Activated B cell treated with CpG ODN at 0.5 μM for 24 hours (primary cell): ENCODE measurements at regions of chr10 and their contacts with region 1.

Region 1: GRCh38 chr10:89207181-89207800 is at the start of gene CH25H:
- DNase-seq: no peak
- ATAC-seq: peak; percentile 65
- H3K4me3 Mint-ChIP-seq: peak within 1 kb of the TSS; percentile 83
- H3K27ac Mint-ChIP-seq: no peak within 1 kb of the TSS
- H3K4me1 Mint-ChIP-seq: peaks cover 27% of the 10 kb centered on the region
- H3K27me3 Mint-ChIP-seq: peaks cover 47% of the 10 kb centered on the region
- CTCF ChIP-seq: no peak
- total RNA-seq, gene CH25H: not detected in 2 replicates

Region 2: DNA sequence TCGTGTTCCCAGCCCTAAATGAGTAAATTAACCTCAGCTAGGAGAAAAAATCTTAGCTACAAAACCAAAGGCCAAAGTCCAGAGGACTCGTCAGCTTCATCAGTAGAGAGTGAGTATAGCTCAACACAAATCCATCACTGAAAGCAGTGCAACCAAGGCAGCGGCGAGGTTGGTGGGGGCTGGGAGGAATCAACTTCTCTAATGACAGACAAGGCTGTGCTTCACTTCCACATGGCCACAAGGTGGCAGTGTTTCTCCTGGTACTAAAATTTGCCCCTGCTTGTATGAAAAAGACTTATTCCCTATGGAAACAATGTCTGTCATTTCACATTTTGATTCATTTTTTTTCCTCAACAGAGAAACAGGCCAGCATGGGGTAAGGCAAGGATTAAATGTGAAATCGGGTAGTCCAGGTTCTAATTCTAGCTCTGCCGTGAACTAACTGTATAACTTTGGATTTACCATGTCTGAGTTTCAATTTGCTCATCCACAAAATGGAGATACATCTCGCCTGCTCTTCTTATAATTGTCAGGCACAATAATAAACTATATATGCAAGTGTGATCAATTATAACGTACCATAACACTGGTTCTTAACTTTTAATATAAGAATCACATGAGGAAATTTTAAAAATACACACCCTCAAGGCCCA is 177.4 kb before region 1 on chr10:
- CTCF ChIA-PET with region 1: interaction called, 16 read pairs
- POLR2A ChIA-PET with region 1: interaction called, 4 read pairs
- intact Hi-C with region 1: no loop called
- DNase-seq: peak; percentile 22
- ATAC-seq: peak; percentile 82
- H3K4me3 Mint-ChIP-seq: no peak overlapping the region
- H3K27ac Mint-ChIP-seq: no peak overlapping the region
- H3K4me1 Mint-ChIP-seq: peaks cover 15% of the 10 kb centered on the region
- H3K27me3 Mint-ChIP-seq: no peaks in the 10 kb centered on the region
- CTCF ChIP-seq: peak; percentile 70

Region 3: DNA sequence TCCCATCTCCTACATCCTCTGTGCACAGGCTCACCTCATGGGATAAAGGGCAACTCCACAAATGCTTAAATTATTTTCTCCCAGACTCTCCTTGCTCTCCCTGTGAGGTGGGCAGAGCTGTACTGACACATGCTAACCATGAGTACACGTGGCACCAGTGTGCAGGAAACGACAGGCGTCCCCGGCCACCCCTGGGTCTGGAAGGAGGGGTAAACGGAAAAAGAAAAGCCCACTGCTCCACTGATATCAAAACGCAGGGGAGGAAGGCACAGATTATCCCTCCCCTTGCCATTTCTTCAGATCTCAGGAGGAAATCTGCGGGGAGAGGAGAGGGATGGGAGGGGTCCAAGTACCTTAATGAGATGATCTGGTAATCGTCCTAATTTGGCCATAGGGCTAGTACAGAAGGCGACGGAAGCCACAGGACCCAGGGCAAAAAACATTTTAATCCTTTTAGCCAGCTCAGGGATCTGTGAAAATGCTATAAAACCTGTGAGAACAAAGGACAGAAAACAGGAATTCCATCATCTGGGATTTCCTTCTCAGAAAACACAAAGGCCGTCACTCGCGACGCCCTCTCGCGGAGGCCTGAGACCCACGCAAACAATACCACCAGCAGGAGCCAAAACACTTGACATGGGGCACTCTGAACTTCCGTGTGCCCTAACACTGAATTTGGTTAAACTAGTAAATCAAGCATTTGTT is 17.6 kb after region 1 on chr10:
- CTCF ChIA-PET with region 1: no interaction called
- POLR2A ChIA-PET with region 1: no interaction called
- intact Hi-C with region 1: no loop called
- DNase-seq: no peak
- ATAC-seq: no peak
- H3K4me3 Mint-ChIP-seq: peak overlapping the region; percentile 46
- H3K27ac Mint-ChIP-seq: no peak overlapping the region
- H3K4me1 Mint-ChIP-seq: no peaks in the 10 kb centered on the region
- H3K27me3 Mint-ChIP-seq: no peaks in the 10 kb centered on the region
- CTCF ChIP-seq: no peak

Region 4: DNA sequence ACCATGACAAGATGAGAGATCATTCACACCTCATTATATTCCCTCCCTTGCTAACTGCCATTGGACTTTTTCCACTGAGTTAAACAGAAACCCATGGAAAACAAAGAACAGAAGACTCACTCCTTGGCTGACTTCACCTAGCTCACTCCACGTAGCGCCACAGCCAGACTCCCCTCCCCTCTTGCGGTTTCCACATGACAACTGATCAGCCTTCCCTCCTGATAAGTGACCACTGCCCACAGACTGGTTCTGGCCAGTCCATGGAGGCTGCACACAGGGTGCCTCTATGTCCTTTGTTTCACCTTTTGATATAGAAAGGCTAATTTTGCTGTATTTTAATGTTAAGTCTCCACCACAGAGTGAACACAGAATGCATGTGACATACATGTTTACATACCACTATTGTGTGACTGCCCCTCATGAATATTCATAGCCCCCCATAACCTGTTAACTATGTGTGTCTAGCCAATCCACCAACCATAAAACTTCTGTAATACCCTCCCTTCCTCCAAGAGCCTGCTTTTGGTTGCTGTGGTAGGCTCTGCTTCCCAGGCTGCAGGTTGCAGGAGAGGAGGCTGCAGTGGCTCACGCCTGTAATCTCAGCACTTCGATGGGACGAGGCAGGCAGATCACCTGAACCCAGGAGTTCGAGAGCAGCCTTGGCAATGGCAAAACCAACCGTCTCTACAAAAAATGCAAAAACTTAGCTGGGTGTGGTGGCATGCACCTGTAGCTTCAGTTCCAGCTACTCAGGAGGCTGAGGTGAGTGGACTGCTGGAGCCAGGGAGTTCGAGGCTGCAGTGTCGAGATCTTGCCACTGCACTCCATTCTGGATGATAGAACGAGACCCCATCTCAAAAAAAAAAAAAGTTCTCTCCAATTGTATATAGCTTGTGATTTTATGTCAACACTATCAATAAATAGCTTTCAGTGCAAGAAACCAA is 197.1 kb after region 1 on chr10:
- CTCF ChIA-PET with region 1: no interaction called
- POLR2A ChIA-PET with region 1: no interaction called
- intact Hi-C with region 1: no loop called
- DNase-seq: no peak
- ATAC-seq: no peak
- H3K4me3 Mint-ChIP-seq: no peak overlapping the region
- H3K27ac Mint-ChIP-seq: no peak overlapping the region
- H3K4me1 Mint-ChIP-seq: no peaks in the 10 kb centered on the region
- H3K27me3 Mint-ChIP-seq: no peaks in the 10 kb centered on the region
- CTCF ChIP-seq: no peak